ENCODE measurements at regions of chr3 and their contacts with region 1.

Region 1: DNA sequence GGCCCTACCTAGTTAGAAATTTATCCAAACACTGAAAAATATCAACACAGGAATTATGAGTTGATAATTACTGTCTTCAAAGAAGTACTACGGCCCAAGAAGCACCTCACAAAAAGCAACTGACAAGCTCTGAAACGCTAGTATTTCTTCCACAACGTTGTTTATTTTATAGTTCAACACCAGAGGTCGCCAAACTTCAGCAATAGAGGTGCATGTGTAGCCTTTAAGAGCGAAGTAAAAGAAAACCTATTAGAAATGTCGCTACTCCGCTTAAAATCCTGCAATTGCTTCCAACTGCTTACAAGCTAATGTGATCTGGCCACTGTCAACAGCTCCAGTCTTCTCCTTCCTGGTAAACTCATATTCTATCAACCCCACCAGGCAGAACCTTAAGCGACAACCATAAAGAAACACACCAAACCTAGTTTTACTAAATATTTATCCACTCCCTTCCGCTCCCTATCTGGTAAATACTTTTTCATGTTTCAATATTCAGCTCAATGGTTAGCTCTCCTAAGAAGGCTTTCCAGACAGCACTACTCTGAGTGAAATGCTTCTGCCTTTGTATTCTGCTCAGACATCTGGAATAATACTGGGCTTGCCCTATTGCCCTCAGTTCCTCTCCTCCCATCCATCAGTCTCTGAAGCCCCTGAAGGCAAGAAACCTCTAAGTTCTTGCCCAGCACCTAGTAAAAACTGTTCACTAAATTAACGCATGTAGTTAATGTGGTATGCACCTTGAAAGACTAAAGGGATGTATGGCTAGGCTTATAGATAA is 110.2 kb downstream of the NR1I2 start:
- DNase-seq: peak in 4 of 5 donors; percentile 55 to 62 (median 58)
- H3K4me3 ChIP-seq: no peak overlapping the region
- H3K4me3 Mint-ChIP-seq: no peak overlapping the region
- H3K27ac ChIP-seq: no peak overlapping the region
- H3K27ac Mint-ChIP-seq: peak overlapping the region in 2 of 7 donors; percentile 5 to 32
- H3K4me1 ChIP-seq: no peaks in the 10 kb centered on the region
- H3K4me1 Mint-ChIP-seq: peaks cover 11 to 17% (median 15%) of the 10 kb centered on the region in 4 donors
- H3K27me3 ChIP-seq: no peaks in the 10 kb centered on the region
- H3K27me3 Mint-ChIP-seq: no peaks in the 10 kb centered on the region

Region 2: GRCh38 chr3:119880966-119881365 is 11.2 kb before region 1 on chr3:
- CTCF ChIA-PET with region 1: interaction called, 19 read pairs
- POLR2A ChIA-PET with region 1: no interaction called
- intact Hi-C with region 1: no loop called
- DNase-seq: no peak
- H3K4me3 ChIP-seq: no peak overlapping the region
- H3K4me3 Mint-ChIP-seq: no peak overlapping the region
- H3K27ac ChIP-seq: no peak overlapping the region
- H3K27ac Mint-ChIP-seq: peak overlapping the region in 1 of 7 donors; percentile 50
- H3K4me1 ChIP-seq: no peaks in the 10 kb centered on the region
- H3K4me1 Mint-ChIP-seq: peaks cover 5 to 16% (median 8%) of the 10 kb centered on the region in 4 donors
- H3K27me3 ChIP-seq: no peaks in the 10 kb centered on the region
- H3K27me3 Mint-ChIP-seq: no peaks in the 10 kb centered on the region

Region 3: DNA sequence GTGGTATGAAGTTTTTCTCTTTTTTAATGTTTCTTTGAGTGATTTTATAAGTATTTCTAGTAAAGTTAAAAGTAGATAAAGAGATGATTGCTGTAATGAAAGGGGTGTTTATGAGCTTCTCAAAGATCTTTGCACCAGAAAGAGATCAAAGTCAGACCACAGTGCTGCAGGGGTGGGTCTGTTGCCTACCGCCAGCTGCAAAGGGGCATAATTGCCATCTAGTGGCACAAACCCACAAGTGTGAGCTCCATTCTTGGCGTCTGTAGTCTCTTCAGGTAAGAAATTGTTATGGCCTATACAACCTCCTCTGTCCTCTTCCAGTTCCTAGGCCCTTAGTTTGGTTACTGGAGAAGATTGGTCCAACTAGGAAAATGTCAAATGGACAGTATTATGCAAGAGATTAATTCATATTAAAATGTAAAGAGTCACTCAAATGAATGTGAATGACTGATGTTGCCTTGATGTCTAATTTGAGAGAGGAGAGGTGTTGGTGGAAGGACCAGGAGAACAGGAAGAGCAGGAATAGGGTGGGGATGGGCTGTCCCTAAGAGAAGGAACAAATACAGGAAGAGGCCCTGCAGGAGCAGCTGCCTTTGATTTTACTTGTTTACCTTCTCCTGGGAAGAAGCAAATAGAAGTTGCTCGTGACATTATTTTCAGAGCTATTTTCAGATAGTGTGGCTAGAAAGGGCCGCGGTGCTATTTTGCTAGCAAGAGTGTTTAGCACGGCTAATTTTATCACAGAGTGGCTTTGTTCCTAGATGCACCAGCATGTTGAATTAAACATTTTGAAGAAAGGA is 255.1 kb after region 1 on chr3:
- CTCF ChIA-PET with region 1: interaction called, 181 read pairs
- POLR2A ChIA-PET with region 1: interaction called, 7 read pairs
- intact Hi-C with region 1: loop called (anchors 1 kb)
- DNase-seq: peak; percentile 47 to 60 (median 52)
- H3K4me3 ChIP-seq: no peak overlapping the region
- H3K4me3 Mint-ChIP-seq: no peak overlapping the region
- H3K27ac ChIP-seq: no peak overlapping the region
- H3K27ac Mint-ChIP-seq: peak overlapping the region in 1 of 7 donors; percentile 44
- H3K4me1 ChIP-seq: peaks cover 3% of the 10 kb centered on the region
- H3K4me1 Mint-ChIP-seq: peaks cover 4 to 13% (median 6%) of the 10 kb centered on the region in 4 donors
- H3K27me3 ChIP-seq: no peaks in the 10 kb centered on the region
- H3K27me3 Mint-ChIP-seq: no peaks in the 10 kb centered on the region

Region 4: DNA sequence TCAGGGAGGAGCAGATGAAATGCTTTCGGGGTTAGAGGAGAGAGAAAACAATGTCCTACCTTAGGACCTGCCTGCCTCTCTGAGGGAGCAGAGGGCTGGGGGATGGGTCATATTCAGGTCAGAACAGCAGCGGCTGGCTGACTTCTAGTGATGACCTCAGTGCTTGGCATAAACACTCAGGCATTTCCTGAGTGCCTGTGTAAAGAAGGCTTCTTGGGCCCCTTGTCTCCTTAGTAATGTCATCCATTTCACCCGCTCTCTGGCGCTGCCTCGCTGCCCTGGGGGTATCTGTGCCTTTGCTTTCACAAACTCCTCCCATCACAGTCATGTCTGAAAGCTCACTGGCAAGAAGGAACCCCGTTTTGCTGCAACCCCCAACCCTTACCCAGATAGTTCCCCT is 285.0 kb after region 1 on chr3:
- CTCF ChIA-PET with region 1: interaction called, 15 read pairs
- POLR2A ChIA-PET with region 1: no interaction called
- intact Hi-C with region 1: loop called (anchors 1 kb)
- DNase-seq: no peak
- H3K4me3 ChIP-seq: no peak overlapping the region
- H3K4me3 Mint-ChIP-seq: no peak overlapping the region
- H3K27ac ChIP-seq: no peak overlapping the region
- H3K27ac Mint-ChIP-seq: no peak overlapping the region
- H3K4me1 ChIP-seq: no peaks in the 10 kb centered on the region
- H3K4me1 Mint-ChIP-seq: no peaks in the 10 kb centered on the region
- H3K27me3 ChIP-seq: no peaks in the 10 kb centered on the region
- H3K27me3 Mint-ChIP-seq: peaks cover 0 to 4% of the 10 kb centered on the region in 2 donors

Region 5: GRCh38 chr3:120198305-120198878 is 306.3 kb after region 1 on chr3:
- CTCF ChIA-PET with region 1: interaction called, 21 read pairs
- POLR2A ChIA-PET with region 1: no interaction called
- intact Hi-C with region 1: loop called (anchors 1 kb)
- DNase-seq: peak in 1 of 5 donors; percentile 6
- H3K4me3 ChIP-seq: no peak overlapping the region
- H3K4me3 Mint-ChIP-seq: no peak overlapping the region
- H3K27ac ChIP-seq: no peak overlapping the region
- H3K27ac Mint-ChIP-seq: no peak overlapping the region
- H3K4me1 ChIP-seq: no peaks in the 10 kb centered on the region
- H3K4me1 Mint-ChIP-seq: no peaks in the 10 kb centered on the region
- H3K27me3 ChIP-seq: no peaks in the 10 kb centered on the region
- H3K27me3 Mint-ChIP-seq: no peaks in the 10 kb centered on the region

Region 6: GRCh38 chr3:120245386-120245785 is 353.3 kb after region 1 on chr3:
- CTCF ChIA-PET with region 1: interaction called, 5 read pairs
- POLR2A ChIA-PET with region 1: no interaction called
- intact Hi-C with region 1: loop called (anchors 1 kb)
- DNase-seq: no peak
- H3K4me3 ChIP-seq: no peak overlapping the region
- H3K4me3 Mint-ChIP-seq: no peak overlapping the region
- H3K27ac ChIP-seq: no peak overlapping the region
- H3K27ac Mint-ChIP-seq: no peak overlapping the region
- H3K4me1 ChIP-seq: no peaks in the 10 kb centered on the region
- H3K4me1 Mint-ChIP-seq: no peaks in the 10 kb centered on the region
- H3K27me3 ChIP-seq: peaks cover 4% of the 10 kb centered on the region
- H3K27me3 Mint-ChIP-seq: peaks cover 11 to 17% of the 10 kb centered on the region in 2 donors

Region 7: DNA sequence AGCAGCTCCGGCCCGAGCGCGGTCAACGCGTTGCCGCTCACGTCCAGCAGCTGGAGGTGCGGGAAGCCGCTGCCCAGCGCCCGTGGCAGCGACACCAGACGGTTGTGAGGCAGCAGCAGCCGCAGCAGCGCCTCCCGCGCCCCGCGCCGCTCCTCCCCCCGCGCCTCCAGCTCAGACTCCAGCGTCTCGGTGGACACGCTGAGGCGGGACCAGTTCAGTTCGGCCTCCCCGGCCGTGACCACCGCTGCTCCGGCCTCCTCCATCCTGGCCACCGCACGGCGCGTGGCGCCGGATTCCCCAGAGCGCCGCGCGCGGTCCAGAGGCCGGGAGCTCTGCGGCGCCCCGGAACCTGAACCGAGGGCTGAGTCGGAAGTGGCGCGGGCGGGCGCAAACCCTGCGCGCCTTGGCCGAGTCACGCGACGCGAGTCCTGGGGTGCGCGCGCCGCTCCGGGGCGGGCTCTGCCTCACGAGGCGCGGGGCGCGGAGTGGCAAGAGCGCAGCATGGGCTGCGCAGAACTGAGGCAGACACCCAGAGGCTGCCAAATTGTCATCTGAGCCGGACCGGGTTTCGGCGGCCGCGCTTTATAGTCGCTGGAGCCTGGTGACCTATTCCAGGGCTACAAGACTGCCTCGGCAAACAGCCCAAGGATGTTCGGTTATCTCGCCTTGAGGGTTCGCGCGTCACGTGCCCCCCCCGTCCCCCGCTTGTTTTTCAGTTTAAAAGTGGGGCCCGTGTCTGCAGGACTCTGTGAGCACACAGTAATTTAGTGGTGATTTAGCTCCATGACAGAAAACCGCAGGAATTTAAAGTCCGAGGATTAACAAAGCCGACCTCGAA is 457.1 kb after region 1 on chr3 and contains the start of gene LRRC58:
- CTCF ChIA-PET with region 1: interaction called, 4 read pairs
- POLR2A ChIA-PET with region 1: interaction called, 3 read pairs
- intact Hi-C with region 1: loop called (anchors 10 kb)
- DNase-seq: peak; percentile 86 to 93 (median 93)
- H3K4me3 ChIP-seq: peak within 1 kb of the TSS; percentile 67 to 91
- H3K4me3 Mint-ChIP-seq: peak within 1 kb of the TSS; percentile 88 to 95 (median 93)
- H3K27ac ChIP-seq: peak within 1 kb of the TSS; percentile 77
- H3K27ac Mint-ChIP-seq: peak within 1 kb of the TSS; percentile 87 to 96 (median 92)
- H3K4me1 ChIP-seq: peaks cover 46% of the 10 kb centered on the region
- H3K4me1 Mint-ChIP-seq: peaks cover 36 to 50% (median 43%) of the 10 kb centered on the region in 4 donors
- H3K27me3 ChIP-seq: no peaks in the 10 kb centered on the region
- H3K27me3 Mint-ChIP-seq: peaks cover 2% of the 10 kb centered on the region in 2 donors
- total RNA-seq, gene LRRC58: 23.0 to 23.6 TPM

Measured in CD4-positive, alpha-beta memory T cell (primary cell).